AG04450 (cell line): ENCODE measurements at regions of chr15 and their contacts with region 1.

Region 1: GRCh38 chr15:45457641-45458433 is 64.7 kb downstream of the SLC30A4 start:
- DNase-seq: peak; percentile 63
- H3K4me3 ChIP-seq: peak overlapping the region; percentile 58
- H3K27ac ChIP-seq: no peak overlapping the region
- H3K27me3 ChIP-seq: no peaks in the 10 kb centered on the region
- CTCF ChIP-seq: peak; percentile 68

Region 2: DNA sequence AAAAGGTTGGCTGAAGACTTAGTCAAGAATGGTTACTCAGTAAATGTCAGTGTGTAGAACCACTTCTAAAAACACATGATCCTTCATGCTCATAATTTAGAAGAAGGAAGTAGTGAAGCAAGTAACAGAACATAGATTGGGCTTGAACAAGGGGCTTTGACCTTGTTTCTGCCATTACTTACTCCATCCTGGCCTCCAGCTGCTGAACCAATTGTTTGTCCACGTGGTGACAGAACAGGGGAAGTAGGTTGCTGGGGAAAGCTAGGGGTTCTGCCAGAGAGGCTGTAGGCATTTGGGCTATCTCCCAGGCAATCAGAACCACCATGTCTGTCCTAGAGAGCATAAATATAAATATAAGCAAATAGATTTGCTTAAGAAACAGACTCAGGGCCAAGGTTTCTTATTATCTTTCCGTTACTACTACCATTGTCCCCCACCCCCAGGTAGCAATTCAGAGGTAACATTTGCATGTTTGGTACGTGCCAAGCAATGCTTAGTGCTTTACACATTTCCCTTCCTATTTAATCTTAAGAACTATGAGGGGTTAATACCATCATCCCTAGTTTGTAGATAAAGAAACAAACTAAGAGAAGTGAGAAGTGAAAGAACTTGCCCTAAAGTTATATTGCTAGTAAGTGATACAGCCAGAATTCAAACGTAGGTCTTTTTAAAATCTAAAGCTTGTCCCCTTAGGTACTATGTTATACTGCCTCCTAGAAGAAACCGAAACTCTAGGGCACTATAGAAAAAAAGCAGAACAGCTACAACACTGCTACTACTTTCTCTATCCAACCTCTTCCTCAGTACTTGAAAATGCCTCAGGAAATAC is 791.4 kb before region 1 on chr15:
- CTCF ChIA-PET with region 1: no interaction called
- POLR2A ChIA-PET with region 1: no interaction called
- DNase-seq: no peak
- H3K4me3 ChIP-seq: no peak overlapping the region
- H3K27ac ChIP-seq: no peak overlapping the region
- H3K27me3 ChIP-seq: peaks cover 8% of the 10 kb centered on the region
- CTCF ChIP-seq: no peak

Region 3: GRCh38 chr15:45048794-45049631 is 408.8 kb before region 1 on chr15:
- CTCF ChIA-PET with region 1: no interaction called
- POLR2A ChIA-PET with region 1: no interaction called
- DNase-seq: no peak
- H3K4me3 ChIP-seq: no peak overlapping the region
- H3K27ac ChIP-seq: no peak overlapping the region
- H3K27me3 ChIP-seq: no peaks in the 10 kb centered on the region
- CTCF ChIP-seq: no peak

Region 4: DNA sequence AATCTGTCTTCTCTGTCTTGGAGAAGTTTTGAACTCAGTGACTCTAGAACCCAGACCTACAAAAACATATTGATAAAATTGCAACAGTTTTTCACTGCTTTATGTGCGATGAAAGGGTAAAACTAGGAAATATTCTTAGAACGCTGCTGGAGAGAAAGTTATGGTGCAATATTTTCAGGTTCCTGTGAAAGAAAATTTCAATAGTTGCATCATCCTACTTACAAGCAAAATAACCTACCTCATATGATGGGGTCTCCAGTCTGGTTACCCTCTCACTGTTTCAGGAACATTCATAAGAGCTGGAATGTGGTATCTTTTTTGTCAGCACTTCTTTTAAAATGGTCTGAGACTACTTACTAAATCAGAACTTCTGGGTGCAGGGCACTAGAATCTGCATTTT is 106.6 kb before region 1 on chr15:
- CTCF ChIA-PET with region 1: no interaction called
- POLR2A ChIA-PET with region 1: no interaction called
- DNase-seq: no peak
- H3K4me3 ChIP-seq: no peak overlapping the region
- H3K27ac ChIP-seq: no peak overlapping the region
- H3K27me3 ChIP-seq: no peaks in the 10 kb centered on the region
- CTCF ChIP-seq: no peak

Region 5: DNA sequence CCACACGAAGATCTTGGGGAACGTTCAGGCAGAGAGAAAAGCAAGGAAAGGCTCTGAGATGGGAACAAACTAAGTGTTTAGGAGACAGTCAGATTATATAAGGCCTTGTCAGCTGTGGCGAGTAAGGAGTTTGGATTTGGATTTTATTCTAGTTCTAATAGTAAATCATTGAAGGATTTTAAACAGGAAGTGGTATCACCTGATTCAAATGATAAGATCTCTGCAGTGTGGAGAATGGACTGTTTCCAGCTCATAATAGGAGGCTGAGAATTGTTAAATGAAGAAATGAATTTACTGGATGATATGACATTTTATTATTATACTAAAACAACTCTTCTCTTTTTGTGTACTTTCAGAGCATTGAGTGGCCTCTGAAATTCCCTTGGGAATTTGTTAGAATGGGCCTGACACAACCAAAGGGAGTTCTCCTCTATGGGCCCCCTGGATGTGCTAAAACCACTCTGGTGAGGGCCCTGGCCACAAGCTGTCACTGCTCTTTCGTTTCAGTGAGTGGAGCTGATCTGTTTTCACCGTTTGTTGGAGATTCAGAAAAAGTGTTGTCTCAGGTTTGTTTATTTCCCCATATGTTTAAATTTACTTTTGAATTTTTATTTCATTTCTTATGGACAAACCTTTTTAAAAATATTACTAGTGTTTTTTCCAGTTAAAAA is 43.5 kb before region 1 on chr15:
- CTCF ChIA-PET with region 1: interaction called, 10 read pairs
- POLR2A ChIA-PET with region 1: no interaction called
- DNase-seq: no peak
- H3K4me3 ChIP-seq: no peak overlapping the region
- H3K27ac ChIP-seq: no peak overlapping the region
- H3K27me3 ChIP-seq: no peaks in the 10 kb centered on the region
- CTCF ChIP-seq: no peak

Region 6: GRCh38 chr15:45435124-45435903 is 22.5 kb before region 1 on chr15:
- CTCF ChIA-PET with region 1: interaction called, 376 read pairs
- POLR2A ChIA-PET with region 1: no interaction called
- DNase-seq: no peak
- H3K4me3 ChIP-seq: no peak overlapping the region
- H3K27ac ChIP-seq: no peak overlapping the region
- H3K27me3 ChIP-seq: peaks cover 3% of the 10 kb centered on the region
- CTCF ChIP-seq: no peak

Region 7: DNA sequence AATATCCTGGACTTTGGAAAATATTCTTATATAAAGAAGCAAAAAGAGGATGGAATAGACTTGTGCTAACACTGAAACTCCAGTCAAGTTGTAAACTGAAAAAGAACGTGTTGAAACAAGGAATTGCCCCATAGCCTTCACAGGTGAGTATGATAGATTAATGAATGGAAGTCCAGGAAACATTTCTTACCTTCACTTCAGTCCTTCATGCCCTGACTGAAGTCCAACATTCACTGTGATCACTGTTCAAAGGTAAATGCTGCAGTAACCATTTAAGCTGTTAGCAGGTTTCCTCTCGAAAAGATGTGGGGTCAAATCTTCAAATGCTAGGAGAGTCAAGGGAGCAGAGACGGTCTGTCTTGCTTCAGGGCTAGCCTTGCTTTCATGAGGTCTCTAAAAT is 18.6 kb after region 1 on chr15:
- CTCF ChIA-PET with region 1: interaction called, 25 read pairs
- POLR2A ChIA-PET with region 1: no interaction called
- DNase-seq: no peak
- H3K4me3 ChIP-seq: no peak overlapping the region
- H3K27ac ChIP-seq: no peak overlapping the region
- H3K27me3 ChIP-seq: peaks cover 3% of the 10 kb centered on the region
- CTCF ChIP-seq: no peak

Region 8: GRCh38 chr15:45611305-45611704 is 153.5 kb after region 1 on chr15:
- CTCF ChIA-PET with region 1: interaction called, 207 read pairs
- POLR2A ChIA-PET with region 1: no interaction called
- DNase-seq: no peak
- H3K4me3 ChIP-seq: no peak overlapping the region
- H3K27ac ChIP-seq: no peak overlapping the region
- H3K27me3 ChIP-seq: no peaks in the 10 kb centered on the region
- CTCF ChIP-seq: peak; percentile 52

Region 9: GRCh38 chr15:46344115-46344724 is 886.4 kb after region 1 on chr15:
- CTCF ChIA-PET with region 1: no interaction called
- POLR2A ChIA-PET with region 1: no interaction called
- DNase-seq: no peak
- H3K4me3 ChIP-seq: no peak overlapping the region
- H3K27ac ChIP-seq: no peak overlapping the region
- H3K27me3 ChIP-seq: no peaks in the 10 kb centered on the region
- CTCF ChIP-seq: no peak